ENCODE measurements at regions of chr12 and their contacts with region 1.

Region 1: DNA sequence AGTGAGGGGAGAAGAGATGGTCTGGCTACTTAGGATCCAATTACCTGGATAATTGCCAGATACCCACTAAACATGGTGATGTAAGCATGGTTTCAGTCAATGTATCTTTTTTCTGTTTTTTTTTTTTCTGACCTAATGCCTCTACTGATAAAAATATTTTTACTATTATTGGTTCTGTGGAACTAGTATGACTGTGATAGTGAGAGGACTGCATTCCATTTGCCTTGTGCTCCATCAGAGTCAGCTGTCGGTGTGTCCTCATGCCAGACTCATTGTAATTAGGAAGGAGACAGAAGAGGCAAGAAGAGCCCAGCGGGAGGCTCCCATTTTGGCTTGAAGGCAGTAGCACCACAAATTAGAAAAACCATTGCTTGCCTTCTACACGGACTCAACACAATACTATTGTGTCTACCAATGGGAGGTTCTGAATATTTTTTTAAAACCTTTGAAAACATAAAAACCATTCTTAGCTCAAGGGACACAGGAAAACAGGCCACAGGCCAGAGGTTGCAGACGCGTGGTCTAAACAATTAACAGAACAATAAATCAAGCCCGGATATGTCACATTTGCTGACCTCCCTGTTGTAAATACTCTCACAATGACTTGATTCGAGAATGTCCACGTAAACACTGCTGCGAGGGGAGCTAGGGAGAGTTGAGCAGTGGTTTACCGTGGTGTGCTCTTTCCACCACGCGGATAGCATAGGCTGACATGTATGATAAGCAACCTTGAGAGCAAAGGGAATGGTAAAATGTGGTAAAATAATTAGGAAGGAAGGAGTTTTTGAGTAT is 13.5 kb upstream of the DCP1B start:
- DNase-seq: no peak
- ATAC-seq: peak; percentile 88
- H3K4me3 ChIP-seq: no peak overlapping the region
- H3K27ac ChIP-seq: no peak overlapping the region
- H3K4me1 ChIP-seq: no peaks in the 10 kb centered on the region; the same call in 1 of the 2 replicates
- H3K27me3 ChIP-seq: no peaks in the 10 kb centered on the region; a peak in 1 of 4 replicates
- CTCF ChIP-seq: no peak
- EP300 ChIP-seq: peak; percentile 53 to 77; a peak in 3 of 4 replicates
- POLR2A ChIP-seq: no peak
- RAD21 ChIP-seq: no peak

Region 2: GRCh38 chr12:1619587-1619986 is 398.2 kb before region 1 on chr12:
- CTCF ChIA-PET with region 1: no interaction called
- POLR2A ChIA-PET with region 1: no interaction called
- RAD21 ChIA-PET with region 1: no interaction called
- SMC1A ChIA-PET with region 1: no interaction called
- in situ Hi-C with region 1: no loop called
- intact Hi-C with region 1: no loop called
- DNase-seq: peak; percentile 55
- ATAC-seq: peak; percentile 92
- H3K4me3 ChIP-seq: no peak overlapping the region; the same call in 1 of the 2 replicates
- H3K27ac ChIP-seq: no peak overlapping the region
- H3K4me1 ChIP-seq: peaks cover 26% of the 10 kb centered on the region
- H3K27me3 ChIP-seq: no peaks in the 10 kb centered on the region
- CTCF ChIP-seq: no peak
- EP300 ChIP-seq: no peak
- POLR2A ChIP-seq: no peak
- RAD21 ChIP-seq: no peak

Region 3: DNA sequence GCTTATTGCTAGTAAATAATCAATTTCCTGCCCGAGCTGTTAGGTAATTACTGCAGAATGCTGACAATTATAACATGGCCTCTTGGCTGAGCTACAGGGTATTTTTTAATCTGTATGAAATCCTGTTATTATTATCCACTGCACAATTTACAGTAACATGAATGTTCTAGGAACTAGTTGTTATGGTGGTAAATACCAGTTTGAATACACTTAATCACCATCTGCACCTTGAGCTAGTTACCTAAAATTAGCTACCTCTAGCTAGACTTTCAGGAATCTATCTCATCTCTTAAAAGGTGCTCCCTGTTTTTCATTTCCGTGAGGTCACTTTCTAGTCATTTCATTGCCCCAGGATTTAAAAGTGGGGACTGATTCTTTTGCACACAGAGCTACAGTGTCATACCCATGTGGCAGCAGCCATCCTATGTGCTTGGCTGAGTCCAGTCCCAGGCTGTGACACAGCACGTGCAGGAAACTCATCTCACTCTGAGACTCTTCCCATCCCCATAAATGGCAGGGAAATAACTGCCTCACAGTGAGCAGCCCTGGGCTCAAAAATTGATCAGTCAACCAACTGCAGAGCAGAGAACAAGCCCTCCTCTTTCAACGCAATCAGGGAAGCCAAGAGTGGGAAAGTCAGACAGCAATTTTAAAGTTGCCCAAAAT is 51.0 kb before region 1 on chr12:
- CTCF ChIA-PET with region 1: no interaction called
- POLR2A ChIA-PET with region 1: no interaction called
- RAD21 ChIA-PET with region 1: no interaction called
- SMC1A ChIA-PET with region 1: no interaction called
- in situ Hi-C with region 1: no loop called
- intact Hi-C with region 1: no loop called
- DNase-seq: no peak
- ATAC-seq: no peak
- H3K4me3 ChIP-seq: no peak overlapping the region
- H3K27ac ChIP-seq: no peak overlapping the region
- H3K4me1 ChIP-seq: no peaks in the 10 kb centered on the region
- H3K27me3 ChIP-seq: no peaks in the 10 kb centered on the region
- CTCF ChIP-seq: no peak
- EP300 ChIP-seq: no peak
- POLR2A ChIP-seq: no peak
- RAD21 ChIP-seq: no peak

Region 4: DNA sequence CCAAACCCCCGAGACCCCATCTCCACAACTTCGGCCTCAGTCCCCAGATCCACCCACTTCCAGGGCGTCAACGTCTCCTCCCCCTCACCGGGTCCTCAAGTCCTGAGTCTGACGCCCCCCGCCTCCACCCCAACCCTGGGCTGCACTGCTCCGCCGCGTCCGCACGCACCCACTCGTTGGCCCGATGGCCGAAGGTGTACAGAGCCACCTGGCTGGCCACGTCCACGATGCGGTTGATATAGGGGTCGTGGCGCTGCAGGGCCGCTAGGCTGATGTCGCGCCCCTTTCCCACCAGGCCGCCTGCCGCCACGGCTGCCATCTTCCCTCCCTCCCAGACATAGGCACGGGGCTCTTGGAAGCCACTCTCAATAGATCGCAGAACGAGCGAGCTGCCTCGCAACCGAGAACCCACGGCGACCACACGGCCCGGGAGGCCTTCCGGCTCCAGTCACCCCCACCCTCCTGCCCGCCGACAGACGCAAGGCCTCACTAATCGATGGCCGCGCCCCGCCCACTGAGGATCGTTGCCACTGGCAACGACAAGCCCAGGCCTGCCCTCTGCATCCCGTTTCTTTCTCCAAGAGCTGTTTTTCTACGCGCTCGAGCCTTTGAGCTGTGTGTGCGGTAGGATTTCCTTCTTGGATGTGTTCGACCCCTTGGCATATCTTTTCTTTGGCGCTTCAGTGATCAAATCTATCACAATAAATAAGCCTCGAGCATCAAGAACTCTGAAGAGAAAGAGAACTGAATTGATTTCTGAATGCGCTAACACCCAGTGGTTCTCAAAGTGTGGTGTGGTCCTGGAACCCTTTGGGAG is 13.4 kb before region 1 on chr12 and contains the start of gene DCP1B:
- CTCF ChIA-PET with region 1: interaction called, 7 read pairs
- POLR2A ChIA-PET with region 1: interaction called, 4 read pairs
- RAD21 ChIA-PET with region 1: interaction called, 12 read pairs
- SMC1A ChIA-PET with region 1: interaction called, 8 read pairs
- in situ Hi-C with region 1: no loop called
- intact Hi-C with region 1: no loop called
- DNase-seq: peak; percentile 83
- ATAC-seq: peak; percentile 100
- H3K4me3 ChIP-seq: peak within 1 kb of the TSS; percentile 81
- H3K27ac ChIP-seq: peak within 1 kb of the TSS; percentile 86
- H3K4me1 ChIP-seq: no peaks in the 10 kb centered on the region
- H3K27me3 ChIP-seq: no peaks in the 10 kb centered on the region
- CTCF ChIP-seq: no peak
- EP300 ChIP-seq: peak in 1 of 2 experiments; percentile 43; a peak in 1 of 4 replicates
- POLR2A ChIP-seq: peak; percentile 98
- RAD21 ChIP-seq: no peak
- polyA plus RNA-seq, gene DCP1B: 1.3 to 2.2 TPM

Region 5: DNA sequence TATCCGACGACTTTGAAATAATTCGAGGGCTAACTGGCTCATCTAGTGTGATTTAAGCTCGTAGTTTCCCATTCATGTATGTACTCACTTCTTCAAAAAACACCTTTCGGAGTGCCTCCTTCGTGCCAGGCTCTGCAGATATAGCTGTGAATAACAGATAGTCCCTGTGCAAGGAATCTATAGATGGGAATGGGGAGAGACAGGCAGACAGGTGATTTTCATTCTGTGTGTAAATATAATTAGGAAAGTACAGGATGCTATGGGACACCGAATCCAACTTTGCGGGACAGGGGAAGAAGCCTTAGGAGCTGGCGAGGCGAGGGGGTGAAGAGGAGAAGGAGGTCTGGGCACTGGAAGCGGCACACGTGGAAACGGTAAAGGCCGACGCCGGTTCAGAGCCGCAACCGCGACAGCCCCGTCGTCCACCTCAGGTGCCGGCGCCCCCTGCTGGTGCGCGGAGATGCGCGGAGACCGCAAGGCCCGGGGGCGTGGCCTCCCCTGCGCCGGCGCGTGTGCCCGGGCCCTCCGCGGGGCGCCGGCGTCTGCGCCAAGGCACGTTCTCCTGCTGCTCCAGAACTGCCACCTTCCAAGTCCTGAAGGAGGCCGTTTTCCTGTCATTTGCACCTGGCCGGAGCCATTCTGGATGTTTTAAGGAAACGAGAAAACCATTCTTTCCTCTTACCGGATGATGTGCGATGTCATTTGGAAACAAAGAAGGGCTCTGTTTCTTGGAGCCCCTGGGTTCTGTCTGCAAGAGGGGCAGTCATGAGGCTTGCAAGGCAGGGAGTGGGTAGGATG is 17.1 kb after region 1 on chr12:
- CTCF ChIA-PET with region 1: interaction called, 12 read pairs
- POLR2A ChIA-PET with region 1: interaction called, 3 read pairs
- RAD21 ChIA-PET with region 1: interaction called, 3 read pairs
- SMC1A ChIA-PET with region 1: interaction called, 6 read pairs
- in situ Hi-C with region 1: no loop called
- intact Hi-C with region 1: no loop called
- DNase-seq: peak; percentile 12
- ATAC-seq: peak; percentile 100
- H3K4me3 ChIP-seq: peak overlapping the region; percentile 34; the same call in 1 of the 2 replicates
- H3K27ac ChIP-seq: no peak overlapping the region
- H3K4me1 ChIP-seq: 0 out of 2 replicates have a peak, but pooled peaks cover 3% of the 10 kb centered on the region
- H3K27me3 ChIP-seq: peaks cover 3 to 6% of the 10 kb centered on the region in 2 experiments
- CTCF ChIP-seq: peak; percentile 85 to 93 (median 86)
- EP300 ChIP-seq: no peak
- POLR2A ChIP-seq: peak; percentile 40; the same call in 1 of the 2 replicates
- RAD21 ChIP-seq: peak; percentile 69

Measured in GM12878 (cell line).